ENCODE measurements at regions of chr12 and their contacts with region 1.

Region 1: DNA sequence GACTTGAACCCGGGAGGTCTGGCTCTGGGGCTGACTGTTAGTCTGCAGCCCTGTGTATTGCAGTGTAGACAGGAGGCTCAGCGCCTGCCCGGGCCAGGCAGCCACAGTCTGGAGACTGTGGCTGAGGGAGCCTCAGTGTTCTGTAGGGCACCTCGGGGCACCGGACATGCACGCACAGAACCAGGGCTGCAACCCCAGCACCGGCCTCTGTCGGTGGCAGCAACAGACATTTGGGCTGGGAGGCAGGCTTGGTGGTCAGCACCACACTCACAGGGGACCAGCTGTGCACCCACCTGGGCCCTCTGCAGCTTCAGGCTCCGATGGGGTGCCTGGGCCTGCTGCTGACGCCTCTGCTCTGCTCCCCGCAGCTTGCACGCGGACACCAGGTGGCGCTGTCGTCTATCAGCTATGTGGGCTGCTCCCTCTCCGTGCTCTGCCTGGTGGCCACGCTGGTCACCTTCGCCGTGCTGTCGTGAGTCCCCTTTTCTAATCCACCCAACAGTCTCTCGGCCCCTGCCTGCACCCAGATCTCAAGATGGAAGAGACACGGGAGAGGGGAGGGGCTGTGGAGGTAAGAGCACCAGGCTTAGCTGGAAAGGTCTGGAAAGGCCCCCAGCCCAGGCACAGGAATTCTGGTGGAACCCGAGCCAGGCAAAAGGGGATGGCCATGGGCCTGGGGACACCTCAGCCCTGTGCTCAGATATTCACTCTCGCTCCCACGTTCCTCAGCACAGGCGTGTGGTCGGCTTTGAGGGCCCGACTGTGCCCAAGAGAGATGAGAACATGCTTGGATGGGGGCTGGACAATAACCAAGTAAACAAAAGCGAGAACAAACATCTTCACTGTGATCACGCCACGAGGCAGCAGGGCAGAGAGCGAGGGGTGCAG is 151.0 kb downstream of the ADGRD1 start:
- DNase-seq: peak; percentile 5
- H3K4me3 ChIP-seq: no peak overlapping the region
- H3K27ac ChIP-seq: no peak overlapping the region
- H3K4me1 ChIP-seq: no peaks in the 10 kb centered on the region
- H3K27me3 ChIP-seq: no peaks in the 10 kb centered on the region
- CTCF ChIP-seq: peak in 1 of 2 donors; percentile 43

Region 2: DNA sequence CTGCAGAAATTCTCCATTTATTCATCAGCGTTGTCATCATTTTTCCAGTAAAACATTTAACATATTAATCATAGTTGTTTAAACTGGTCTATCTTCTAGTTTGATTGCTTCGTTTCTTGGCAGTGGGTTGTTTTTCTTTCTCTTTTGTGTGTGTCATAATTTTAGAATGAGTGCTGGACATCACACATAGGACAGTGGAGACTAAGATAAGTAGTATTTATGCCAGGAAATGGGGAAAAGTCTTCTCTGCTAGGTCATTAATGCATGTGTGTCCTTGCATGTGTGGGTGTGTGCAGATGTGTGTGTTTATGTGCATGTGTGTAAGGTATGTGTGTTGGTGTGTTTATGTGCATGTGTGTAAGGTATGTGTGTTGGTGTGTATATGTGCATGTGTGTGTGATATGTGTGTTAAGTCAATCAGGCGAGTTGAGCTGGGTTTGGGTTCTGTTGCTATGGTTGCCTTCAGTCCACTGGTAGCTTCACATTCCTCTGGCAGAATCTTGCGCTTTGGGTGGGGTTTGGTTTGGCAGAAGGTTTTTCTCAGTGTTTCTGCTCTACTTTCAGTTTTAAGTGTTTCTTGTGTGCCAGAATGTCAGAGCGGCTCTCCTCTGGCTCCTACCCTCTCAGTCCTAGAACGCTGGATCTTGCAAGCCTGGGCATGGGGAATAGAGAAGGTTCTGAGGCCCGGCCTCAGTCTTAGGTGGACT is 158.8 kb before region 1 on chr12:
- CTCF ChIA-PET with region 1: no interaction called
- dilution Hi-C with region 1: loop called (anchors 10 kb)
- in situ Hi-C with region 1: no loop called
- intact Hi-C with region 1: no loop called
- DNase-seq: no peak
- H3K4me3 ChIP-seq: no peak overlapping the region
- H3K27ac ChIP-seq: no peak overlapping the region
- H3K4me1 ChIP-seq: no peaks in the 10 kb centered on the region
- H3K27me3 ChIP-seq: no peaks in the 10 kb centered on the region
- CTCF ChIP-seq: no peak

Region 3: GRCh38 chr12:131046813-131047788 is 57.6 kb before region 1 on chr12:
- CTCF ChIA-PET with region 1: no interaction called
- dilution Hi-C with region 1: no loop called
- in situ Hi-C with region 1: no loop called
- intact Hi-C with region 1: no loop called
- DNase-seq: no peak
- H3K4me3 ChIP-seq: no peak overlapping the region
- H3K27ac ChIP-seq: no peak overlapping the region
- H3K4me1 ChIP-seq: no peaks in the 10 kb centered on the region
- H3K27me3 ChIP-seq: no peaks in the 10 kb centered on the region
- CTCF ChIP-seq: no peak

Region 4: GRCh38 chr12:131116391-131117117 is 11.8 kb after region 1 on chr12:
- CTCF ChIA-PET with region 1: no interaction called
- dilution Hi-C with region 1: no loop called
- in situ Hi-C with region 1: no loop called
- intact Hi-C with region 1: no loop called
- DNase-seq: no peak
- H3K4me3 ChIP-seq: no peak overlapping the region
- H3K27ac ChIP-seq: no peak overlapping the region
- H3K4me1 ChIP-seq: no peaks in the 10 kb centered on the region
- H3K27me3 ChIP-seq: no peaks in the 10 kb centered on the region
- CTCF ChIP-seq: no peak

Region 5: DNA sequence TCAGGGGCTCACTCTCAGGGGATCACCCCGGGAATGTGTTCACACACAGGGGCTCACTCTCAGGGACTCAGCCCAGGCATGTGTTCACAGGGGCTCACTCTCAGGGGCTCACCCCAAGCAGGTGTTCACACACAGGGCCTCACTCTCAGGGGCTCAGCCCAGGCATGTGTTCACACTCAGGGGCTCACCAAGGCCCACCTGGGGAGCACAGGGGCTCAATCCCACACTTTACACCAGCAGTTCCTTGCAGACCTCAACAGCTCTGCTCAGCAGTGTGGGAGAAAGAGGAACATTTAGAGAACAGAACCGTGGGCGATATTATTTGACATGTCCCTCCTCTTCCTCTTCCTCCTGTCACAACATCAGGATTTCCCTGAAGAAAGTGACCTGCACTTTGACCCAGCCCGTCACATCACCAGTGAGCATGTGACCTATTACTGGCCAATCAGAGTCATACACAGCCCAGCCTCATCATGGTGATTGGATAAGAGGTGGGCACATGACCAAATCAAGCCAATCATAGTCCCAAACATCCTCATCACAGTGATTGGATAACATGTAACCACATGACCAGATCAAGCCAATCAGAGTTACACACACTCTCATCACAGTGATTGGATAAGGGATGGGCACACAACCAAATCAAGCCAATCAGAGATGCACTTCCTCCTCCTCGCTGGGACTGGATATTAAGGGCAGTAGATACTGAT is 246.8 kb after region 1 on chr12:
- CTCF ChIA-PET with region 1: no interaction called
- dilution Hi-C with region 1: loop called (anchors 10 kb)
- in situ Hi-C with region 1: no loop called
- intact Hi-C with region 1: no loop called
- DNase-seq: no peak
- H3K4me3 ChIP-seq: no peak overlapping the region
- H3K27ac ChIP-seq: no peak overlapping the region
- H3K4me1 ChIP-seq: no peaks in the 10 kb centered on the region
- H3K27me3 ChIP-seq: no peaks in the 10 kb centered on the region
- CTCF ChIP-seq: no peak

Measured in mammary epithelial cell (primary cell).